ENCODE measurements at regions of chr2 and their contacts with region 1.

Region 1: GRCh38 chr2:39696838-39697237 is 31.1 kb downstream of the TMEM178A start:
- DNase-seq: peak; percentile 65
- ATAC-seq: peak; percentile 88
- H3K4me3 ChIP-seq: no peak overlapping the region
- H3K27ac ChIP-seq: no peak overlapping the region
- H3K4me1 ChIP-seq: no peaks in the 10 kb centered on the region
- H3K27me3 ChIP-seq: no peaks in the 10 kb centered on the region
- CTCF ChIP-seq: peak; percentile 79

Region 2: DNA sequence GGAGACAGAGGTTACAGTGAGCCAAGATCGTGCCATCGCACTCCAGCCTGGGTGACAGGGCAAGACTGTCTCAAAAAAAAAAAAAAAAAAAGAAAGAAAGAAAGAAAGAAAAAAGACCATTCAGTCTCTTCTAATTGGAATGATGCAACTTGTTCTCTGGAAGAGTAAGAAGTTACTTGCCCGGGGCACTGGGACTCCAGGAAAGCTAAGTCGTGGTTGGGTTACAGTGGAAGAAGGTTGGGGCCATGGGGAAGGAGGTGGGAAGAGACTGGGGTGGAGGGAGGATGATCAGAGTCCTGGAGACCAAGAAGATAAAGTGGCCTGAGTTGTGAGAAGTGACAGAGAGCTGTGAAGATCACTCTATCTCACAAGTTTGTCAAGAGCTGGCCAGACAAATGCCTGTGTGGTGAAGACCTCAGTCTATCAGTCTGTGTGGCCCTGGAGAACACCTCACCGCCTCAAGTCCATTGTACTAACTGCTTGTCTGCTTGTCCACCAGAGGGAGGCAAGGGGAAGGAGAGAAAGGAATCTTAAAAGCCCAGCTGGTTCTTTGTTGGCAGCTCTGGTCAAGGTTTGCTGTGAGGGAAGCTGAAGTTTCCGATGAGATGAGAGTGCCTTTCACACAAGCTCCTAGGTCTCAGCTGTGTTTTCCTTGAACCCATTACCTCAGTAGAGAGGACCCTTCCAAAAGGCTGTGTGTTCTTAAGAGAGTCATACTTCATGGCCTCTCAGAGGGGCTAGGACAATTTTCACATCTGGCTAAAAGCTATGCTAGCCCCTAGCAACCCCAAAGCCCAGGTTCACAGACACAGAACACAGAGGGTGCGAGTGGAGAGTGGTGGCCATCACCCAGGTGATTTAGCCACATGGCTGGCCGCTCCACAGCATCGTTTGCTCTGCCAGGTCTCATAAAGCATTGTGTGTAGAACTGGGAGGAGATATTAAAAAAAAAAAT is 103.1 kb before region 1 on chr2:
- CTCF ChIA-PET with region 1: interaction called, 30 read pairs
- POLR2A ChIA-PET with region 1: no interaction called
- intact Hi-C with region 1: loop called (anchors 1 kb)
- DNase-seq: peak; percentile 79
- ATAC-seq: peak; percentile 97
- H3K4me3 ChIP-seq: no peak overlapping the region
- H3K27ac ChIP-seq: no peak overlapping the region
- H3K4me1 ChIP-seq: no peaks in the 10 kb centered on the region
- H3K27me3 ChIP-seq: no peaks in the 10 kb centered on the region
- CTCF ChIP-seq: peak; percentile 85

Region 3: DNA sequence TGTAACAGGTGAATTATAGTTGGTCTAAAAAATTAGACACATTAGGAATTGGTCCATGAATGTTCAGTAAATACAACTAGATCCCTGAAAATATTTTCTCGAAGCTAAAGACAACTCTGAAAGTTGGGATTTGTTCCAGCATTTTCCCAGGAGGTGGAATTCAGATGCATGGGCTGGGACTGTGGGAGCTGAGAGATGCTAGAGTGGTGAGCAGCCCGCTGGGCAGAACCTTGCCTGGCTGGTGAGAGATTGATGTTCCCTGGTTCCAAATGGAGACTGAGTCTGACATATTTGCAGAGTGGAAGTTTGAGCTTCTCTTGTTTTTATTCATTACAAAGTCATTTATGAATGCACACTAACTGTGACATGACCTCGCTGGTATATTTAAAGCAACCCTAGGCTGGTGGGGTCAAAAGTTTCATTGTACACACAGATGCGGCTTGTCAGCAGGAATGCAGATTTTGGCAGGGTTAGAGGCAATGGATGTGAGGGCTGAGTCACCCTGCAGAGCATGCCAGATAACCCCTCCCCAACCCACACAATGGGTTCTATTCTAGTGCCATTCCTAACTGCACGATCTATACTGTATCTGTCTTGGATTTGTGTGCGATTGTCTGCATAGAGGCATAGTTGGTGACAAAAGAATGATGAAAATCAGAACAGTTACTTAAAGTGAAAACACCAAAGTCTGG is 54.6 kb before region 1 on chr2:
- CTCF ChIA-PET with region 1: no interaction called
- POLR2A ChIA-PET with region 1: no interaction called
- intact Hi-C with region 1: loop called (anchors 1 kb)
- DNase-seq: peak; percentile 95
- ATAC-seq: peak; percentile 92
- H3K4me3 ChIP-seq: peak overlapping the region; percentile 7; the same call in 1 of the 2 replicates
- H3K27ac ChIP-seq: peak overlapping the region; percentile 72
- H3K4me1 ChIP-seq: peaks cover 59% of the 10 kb centered on the region
- H3K27me3 ChIP-seq: no peaks in the 10 kb centered on the region
- CTCF ChIP-seq: no peak

Region 4: DNA sequence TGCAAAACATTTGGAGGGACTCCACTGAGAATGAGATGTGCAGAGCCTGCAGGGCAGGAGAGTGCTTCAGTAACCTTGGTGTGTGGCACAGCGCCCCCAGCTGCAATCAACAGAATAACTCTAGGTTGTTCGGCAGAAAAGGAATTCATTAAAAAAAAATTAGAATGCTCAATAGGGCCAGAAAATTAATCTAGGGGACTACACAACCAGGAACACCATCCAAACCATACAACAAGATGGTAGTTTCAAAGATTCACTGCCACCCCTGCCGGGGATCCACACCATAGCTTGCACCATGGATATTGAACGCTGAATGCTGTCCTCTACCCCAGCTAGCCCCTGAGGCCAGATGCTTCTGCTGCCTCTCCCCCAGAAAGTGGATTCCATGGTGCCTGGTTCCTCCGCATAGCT is 32.1 kb after region 1 on chr2:
- CTCF ChIA-PET with region 1: interaction called, 10 read pairs
- POLR2A ChIA-PET with region 1: no interaction called
- intact Hi-C with region 1: loop called (anchors 1 kb)
- DNase-seq: peak; percentile 57
- ATAC-seq: no peak
- H3K4me3 ChIP-seq: no peak overlapping the region
- H3K27ac ChIP-seq: no peak overlapping the region
- H3K4me1 ChIP-seq: peaks cover 21% of the 10 kb centered on the region
- H3K27me3 ChIP-seq: no peaks in the 10 kb centered on the region
- CTCF ChIP-seq: peak; percentile 94